HepG2 (cell line): ENCODE measurements at regions of chr7 and their contacts with region 1.

Region 1: DNA sequence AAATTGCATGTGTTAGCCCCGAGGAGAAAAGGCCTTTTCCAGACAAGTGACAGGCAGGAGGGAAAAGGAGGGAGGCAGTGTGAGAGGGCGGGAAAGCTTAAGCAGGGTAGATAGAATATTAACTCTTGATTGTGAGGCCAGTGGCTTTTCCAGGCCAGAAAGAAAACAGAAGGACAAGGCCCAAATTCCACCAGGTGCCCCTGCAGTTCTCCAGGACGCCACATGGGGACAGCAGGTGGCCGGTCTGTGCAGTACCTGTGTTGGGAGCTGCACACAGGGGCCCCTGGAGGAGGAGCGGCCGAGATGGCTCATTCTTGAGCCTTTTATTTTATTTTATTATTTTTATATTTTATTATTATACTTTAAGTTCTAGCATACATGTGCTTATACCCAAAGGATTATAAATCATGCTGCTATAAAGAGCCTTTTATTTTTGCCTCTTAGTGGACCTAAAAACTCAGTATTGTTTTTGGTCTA is 141.3 kb upstream of the KLF14 start:
- DNase-seq: peak; percentile 54
- ATAC-seq: peak; percentile 92
- H3K4me3 ChIP-seq: no peak overlapping the region
- H3K27ac ChIP-seq: no peak overlapping the region
- H3K4me1 ChIP-seq: peaks cover 19% of the 10 kb centered on the region
- H3K27me3 ChIP-seq: no peaks in the 10 kb centered on the region
- CTCF ChIP-seq: peak; percentile 87
- EP300 ChIP-seq: 0 out of 4 replicates have a peak, but pooled peaks of 1 of the 2 experiments have one; percentile 33
- POLR2A ChIP-seq: no peak
- RAD21 ChIP-seq: peak; percentile 78

Region 2: GRCh38 chr7:130941322-130942210 is 66.3 kb after region 1 on chr7:
- CTCF ChIA-PET with region 1: no interaction called
- POLR2A ChIA-PET with region 1: no interaction called
- in situ Hi-C with region 1: no loop called
- intact Hi-C with region 1: no loop called
- DNase-seq: peak; percentile 75
- ATAC-seq: peak; percentile 91
- H3K4me3 ChIP-seq: peak overlapping the region; percentile 51 to 69 (median 68)
- H3K27ac ChIP-seq: peak overlapping the region; percentile 90
- H3K4me1 ChIP-seq: peaks cover 81% of the 10 kb centered on the region
- H3K27me3 ChIP-seq: no peaks in the 10 kb centered on the region
- CTCF ChIP-seq: no peak
- EP300 ChIP-seq: no peak; a peak in 1 of 4 replicates
- POLR2A ChIP-seq: peak; percentile 40 to 69; a peak in 3 of 4 replicates
- RAD21 ChIP-seq: no peak; the same call in 1 of the 2 replicates

Region 3: GRCh38 chr7:131040467-131040932 is 165.2 kb after region 1 on chr7:
- CTCF ChIA-PET with region 1: interaction called, 9 read pairs
- POLR2A ChIA-PET with region 1: no interaction called
- in situ Hi-C with region 1: no loop called
- intact Hi-C with region 1: loop called (anchors 2 kb)
- DNase-seq: peak; percentile 57
- ATAC-seq: peak; percentile 75
- H3K4me3 ChIP-seq: no peak overlapping the region
- H3K27ac ChIP-seq: no peak overlapping the region
- H3K4me1 ChIP-seq: peaks cover 15% of the 10 kb centered on the region
- H3K27me3 ChIP-seq: no peaks in the 10 kb centered on the region
- CTCF ChIP-seq: peak; percentile 82
- EP300 ChIP-seq: no peak
- POLR2A ChIP-seq: no peak
- RAD21 ChIP-seq: peak; percentile 65